ENCODE measurements at regions of chrX and their contacts with region 1.

Region 1: DNA sequence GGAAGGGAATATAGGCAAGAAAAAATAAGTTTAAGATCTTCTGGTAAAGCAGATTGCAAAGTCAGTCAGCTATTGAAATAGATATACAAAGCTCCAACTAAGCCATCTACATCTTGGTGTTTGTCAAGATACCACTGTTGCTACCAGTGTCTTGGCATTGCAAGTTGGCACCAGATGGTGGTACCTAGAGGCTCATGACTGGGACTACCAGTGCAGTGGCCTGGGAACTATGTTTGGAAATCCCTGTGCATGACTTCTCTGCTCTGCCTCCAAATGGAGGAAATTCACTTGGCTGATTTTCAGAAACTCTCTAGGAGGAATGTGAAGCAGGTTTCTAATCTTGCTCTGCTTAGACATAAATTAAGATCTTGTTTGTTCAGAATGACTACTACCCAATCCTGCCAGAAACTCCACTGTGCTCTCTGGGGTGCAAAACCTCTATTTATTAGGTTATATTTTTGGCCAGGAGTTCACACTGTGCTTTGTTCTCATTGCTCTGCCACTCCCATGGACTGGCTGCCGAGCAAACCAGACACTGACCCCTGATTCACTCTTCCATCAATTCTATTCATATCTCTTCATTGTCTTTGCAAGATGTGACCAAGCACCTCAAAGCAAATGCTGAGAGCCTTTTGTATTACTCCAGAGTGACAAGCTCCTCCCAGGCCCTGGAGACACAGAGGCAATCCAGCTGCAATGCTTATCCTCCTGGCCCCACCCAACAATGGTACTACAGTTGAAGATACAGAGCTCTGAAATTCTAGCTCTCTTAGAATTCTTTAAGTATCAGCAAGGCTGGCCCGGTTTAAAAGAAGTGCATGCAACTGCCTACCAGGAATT is 272.3 kb upstream of the FGF16 start:
- H3K4me3 ChIP-seq: no peak overlapping the region
- H3K27ac ChIP-seq: no peak overlapping the region
- H3K4me1 ChIP-seq: no peaks in the 10 kb centered on the region
- CTCF ChIP-seq: no peak

Region 2: GRCh38 chrX:76919761-76920160 is 255.1 kb before region 1 on chrX:
- CTCF ChIA-PET with region 1: no interaction called
- POLR2A ChIA-PET with region 1: no interaction called
- H3K4me3 ChIP-seq: no peak overlapping the region
- H3K27ac ChIP-seq: no peak overlapping the region
- H3K4me1 ChIP-seq: no peaks in the 10 kb centered on the region
- CTCF ChIP-seq: no peak

Region 3: DNA sequence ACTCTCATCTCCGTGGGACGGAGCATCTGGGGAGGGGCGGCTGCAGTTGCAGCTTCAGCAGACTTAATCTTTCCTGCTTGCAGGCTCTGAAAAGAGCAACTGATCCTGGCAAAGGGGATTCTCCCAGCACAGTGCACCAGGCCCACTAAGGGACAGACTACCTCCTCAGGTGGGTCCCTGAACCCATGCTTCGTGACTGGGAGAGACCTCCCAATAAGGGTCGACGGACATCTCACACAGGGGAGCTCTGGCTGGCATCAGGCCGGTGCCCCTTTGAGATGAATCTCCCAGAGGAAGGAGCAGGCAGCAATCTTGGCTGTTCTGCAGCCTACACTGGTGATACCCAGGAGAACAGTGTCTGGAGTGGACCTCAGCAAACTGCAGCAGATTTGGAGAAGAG is 31.0 kb before region 1 on chrX:
- CTCF ChIA-PET with region 1: no interaction called
- POLR2A ChIA-PET with region 1: no interaction called
- H3K4me3 ChIP-seq: no peak overlapping the region
- H3K27ac ChIP-seq: no peak overlapping the region
- H3K4me1 ChIP-seq: no peaks in the 10 kb centered on the region
- CTCF ChIP-seq: no peak

Region 4: GRCh38 chrX:77160301-77160700 is 14.6 kb before region 1 on chrX:
- CTCF ChIA-PET with region 1: interaction called, 11 read pairs
- POLR2A ChIA-PET with region 1: no interaction called
- H3K4me3 ChIP-seq: no peak overlapping the region
- H3K27ac ChIP-seq: no peak overlapping the region
- H3K4me1 ChIP-seq: no peaks in the 10 kb centered on the region
- CTCF ChIP-seq: peak; percentile 31; the same call in 1 of the 2 replicates